Posterior cingulate gyrus (tissue), 11 donors: ENCODE measurements at regions of chr2 and their contacts with region 1.

Region 1: DNA sequence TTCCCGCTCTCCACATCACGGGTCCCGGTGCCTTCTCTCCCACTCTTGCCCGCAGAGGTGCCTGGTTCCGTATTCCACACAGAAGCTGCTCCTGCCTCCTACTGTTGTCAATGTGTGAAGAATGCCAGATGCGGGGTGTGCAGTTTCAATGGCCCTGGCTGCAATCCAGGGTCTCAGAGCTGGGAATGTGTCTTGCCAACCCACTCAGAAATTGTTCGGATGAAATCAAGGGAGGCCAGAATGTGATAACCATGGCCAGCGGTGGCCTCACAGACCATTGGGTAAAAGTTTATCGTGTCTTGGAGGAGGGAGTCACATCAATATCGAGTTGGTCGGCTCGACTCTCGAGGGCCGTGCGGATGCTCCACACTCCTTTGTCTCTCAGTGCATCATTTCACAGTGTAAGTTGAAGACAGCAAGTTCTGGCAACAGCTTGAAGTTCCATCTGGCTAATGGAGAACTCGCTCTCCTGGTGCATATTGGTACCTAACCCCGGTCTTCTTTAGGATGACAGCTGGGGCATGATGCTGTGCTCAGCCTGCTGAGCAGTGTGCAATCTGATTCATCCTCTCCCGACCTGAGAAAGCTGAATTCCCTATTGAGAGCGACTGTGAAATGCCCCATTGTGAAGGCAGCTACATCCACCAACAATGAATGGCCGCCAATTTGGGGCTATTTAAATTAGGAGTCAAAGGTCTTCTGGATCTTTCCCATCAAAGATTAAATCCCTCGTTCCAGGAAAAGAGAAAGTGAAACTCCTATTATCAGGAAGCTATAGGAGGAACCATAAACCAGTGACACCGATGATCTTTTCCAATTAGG is 389.0 kb downstream of the SOX11 start:
- DNase-seq: peak in 7 of 10 donors; percentile 10 to 86 (median 55)

Region 2: GRCh38 chr2:5932556-5933469 is 148.3 kb before region 1 on chr2:
- intact Hi-C with region 1: loop called (anchors 2 kb)
- DNase-seq: peak; percentile 76 to 98 (median 84)

Region 3: GRCh38 chr2:5946225-5947115 is 134.7 kb before region 1 on chr2:
- intact Hi-C with region 1: no loop called
- DNase-seq: no peak

Region 4: DNA sequence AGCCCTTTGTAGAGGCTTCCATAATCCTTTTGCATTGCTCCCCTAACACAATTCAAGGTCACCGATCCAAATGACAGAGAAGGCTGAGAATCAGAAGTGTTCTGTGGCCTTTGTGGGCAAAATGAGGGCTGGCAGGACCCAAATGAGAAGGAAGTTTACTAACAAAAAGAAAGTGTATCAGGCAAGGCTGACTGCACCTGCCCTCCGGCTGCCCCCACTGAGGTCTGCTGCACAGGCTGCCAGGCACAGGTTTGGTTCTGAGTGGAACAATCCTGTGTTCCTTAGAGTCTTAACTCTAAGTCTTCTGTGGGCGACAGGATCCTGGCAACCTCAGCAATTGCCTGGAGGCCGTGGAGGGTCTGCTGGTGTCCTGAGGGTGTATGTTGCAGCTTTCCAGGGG is 216.1 kb after region 1 on chr2:
- intact Hi-C with region 1: no loop called
- DNase-seq: no peak